H1 (cell line): ENCODE measurements at regions of chr19 and their contacts with region 1.

Region 1: GRCh38 chr19:43519436-43520088 is 7.4 kb downstream of the ETHE1 start:
- DNase-seq: peak; percentile 66 to 90
- H3K4me3 ChIP-seq: no peak overlapping the region
- H3K27ac ChIP-seq: no peak overlapping the region
- H3K4me1 ChIP-seq: no peaks in the 10 kb centered on the region
- H3K27me3 ChIP-seq: no peaks in the 10 kb centered on the region
- CTCF ChIP-seq: peak; percentile 74 to 91 (median 76)
- EP300 ChIP-seq: no peak
- POLR2A ChIP-seq: no peak
- RAD21 ChIP-seq: peak; percentile 94 to 97

Region 2: DNA sequence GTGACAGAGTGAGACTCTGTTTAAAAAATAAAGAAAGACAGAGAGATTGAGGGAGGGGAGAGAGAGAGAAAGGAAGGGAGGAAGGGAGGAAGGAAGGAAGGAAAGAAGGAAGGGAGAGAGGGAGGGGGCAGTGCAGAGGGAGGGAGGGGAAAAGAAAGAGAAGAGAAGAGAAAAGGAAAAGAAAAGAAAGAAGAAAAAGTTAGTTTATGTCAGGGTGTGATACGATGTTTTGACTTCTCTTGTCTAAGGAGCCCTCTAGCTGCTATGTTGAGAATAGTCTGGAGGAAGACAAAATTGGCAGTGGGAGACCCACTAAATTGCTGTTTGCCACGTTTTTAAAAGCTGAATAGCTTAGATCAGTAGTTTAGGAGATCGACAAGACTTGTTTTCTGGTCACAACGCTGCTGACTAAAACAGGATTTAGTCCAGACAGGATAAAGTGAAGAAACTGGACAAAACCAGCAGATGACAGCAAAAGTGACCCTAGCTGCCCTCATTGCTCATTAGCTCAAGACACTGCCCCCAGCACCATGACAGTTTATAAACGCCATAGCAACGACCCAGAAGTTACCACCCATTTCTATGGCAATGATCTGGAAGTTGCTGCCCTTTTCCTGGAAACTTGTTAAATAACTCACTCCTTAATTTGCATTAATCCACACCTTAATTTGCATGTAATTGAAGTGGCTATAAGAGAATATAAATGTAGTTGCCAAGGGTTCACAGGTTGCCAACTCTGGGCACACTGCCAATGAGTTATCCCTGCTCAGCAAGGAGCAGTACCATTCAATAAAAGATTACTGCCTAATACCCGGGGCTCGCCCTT is 93.8 kb before region 1 on chr19:
- CTCF ChIA-PET with region 1: interaction called, 49 read pairs
- POLR2A ChIA-PET with region 1: no interaction called
- DNase-seq: no peak
- H3K4me3 ChIP-seq: no peak overlapping the region
- H3K27ac ChIP-seq: no peak overlapping the region
- H3K4me1 ChIP-seq: peaks cover 0 to 1% (median 0%) of the 10 kb centered on the region in 4 experiments; a peak in 2 of 7 replicates
- H3K27me3 ChIP-seq: no peaks in the 10 kb centered on the region
- CTCF ChIP-seq: peak in 2 of 3 experiments; percentile 56 to 63; a peak in 2 of 4 replicates
- EP300 ChIP-seq: no peak
- POLR2A ChIP-seq: no peak
- RAD21 ChIP-seq: peak; percentile 66 to 70

Region 3: GRCh38 chr19:43452582-43452981 is 67.0 kb before region 1 on chr19:
- CTCF ChIA-PET with region 1: interaction called, 192 read pairs
- POLR2A ChIA-PET with region 1: interaction called, 15 read pairs
- DNase-seq: no peak
- H3K4me3 ChIP-seq: no peak overlapping the region
- H3K27ac ChIP-seq: no peak overlapping the region
- H3K4me1 ChIP-seq: no peaks in the 10 kb centered on the region
- H3K27me3 ChIP-seq: no peaks in the 10 kb centered on the region
- CTCF ChIP-seq: no peak
- EP300 ChIP-seq: no peak
- POLR2A ChIP-seq: no peak
- RAD21 ChIP-seq: no peak

Region 4: DNA sequence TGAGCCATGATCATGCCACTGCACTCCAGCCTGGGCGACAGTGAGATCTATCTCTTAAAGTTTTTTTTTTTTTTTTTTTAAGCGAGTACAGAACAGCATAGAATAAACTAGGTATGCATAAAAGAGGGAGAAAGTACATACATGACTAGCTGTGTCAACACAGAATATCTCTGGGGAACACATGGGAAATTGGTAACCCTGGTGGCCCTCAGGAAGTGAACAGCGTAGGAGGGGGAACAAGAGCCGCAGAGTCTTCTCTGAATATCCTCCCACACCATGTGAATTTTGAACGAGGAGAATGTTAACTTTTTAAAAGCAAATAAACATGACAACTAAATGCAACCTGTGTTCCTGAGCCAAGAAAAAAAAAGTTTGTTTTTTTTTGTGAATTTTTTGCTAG is 30.3 kb before region 1 on chr19:
- CTCF ChIA-PET with region 1: interaction called, 10 read pairs
- POLR2A ChIA-PET with region 1: no interaction called
- DNase-seq: no peak
- H3K4me3 ChIP-seq: no peak overlapping the region
- H3K27ac ChIP-seq: no peak overlapping the region
- H3K4me1 ChIP-seq: no peaks in the 10 kb centered on the region
- H3K27me3 ChIP-seq: no peaks in the 10 kb centered on the region
- CTCF ChIP-seq: no peak
- EP300 ChIP-seq: no peak
- POLR2A ChIP-seq: no peak
- RAD21 ChIP-seq: no peak

Region 5: GRCh38 chr19:43503501-43504425 is 15.8 kb before region 1 on chr19:
- CTCF ChIA-PET with region 1: interaction called, 25 read pairs
- POLR2A ChIA-PET with region 1: interaction called, 4 read pairs
- DNase-seq: peak; percentile 87 to 99
- H3K4me3 ChIP-seq: peak overlapping the region; percentile 74 to 91 (median 76)
- H3K27ac ChIP-seq: no peak overlapping the region
- H3K4me1 ChIP-seq: peaks cover 0 to 6% (median 0%) of the 10 kb centered on the region in 4 experiments; a peak in 1 of 7 replicates
- H3K27me3 ChIP-seq: peaks cover 3 to 16% (median 14%) of the 10 kb centered on the region in 4 experiments
- CTCF ChIP-seq: peak; percentile 33 to 52 (median 51); a peak in 3 of 4 replicates
- EP300 ChIP-seq: no peak
- POLR2A ChIP-seq: no peak
- RAD21 ChIP-seq: peak; percentile 34 to 37; a peak in 3 of 4 replicates